Activated naive CD4-positive, alpha-beta T cell treated with anti-CD3 and anti-CD28 coated beads for 36 hours (primary cell): ENCODE measurements at regions of chr21 and their contacts with region 1.

Region 1: GRCh38 chr21:17780539-17780938 is 38.6 kb downstream of the C21orf91 start:
- DNase-seq: peak; percentile 77
- H3K4me3 Mint-ChIP-seq: peak overlapping the region; percentile 28
- H3K27ac Mint-ChIP-seq: peak overlapping the region; percentile 87
- H3K4me1 Mint-ChIP-seq: peaks cover 91% of the 10 kb centered on the region
- H3K27me3 Mint-ChIP-seq: no peaks in the 10 kb centered on the region

Region 2: DNA sequence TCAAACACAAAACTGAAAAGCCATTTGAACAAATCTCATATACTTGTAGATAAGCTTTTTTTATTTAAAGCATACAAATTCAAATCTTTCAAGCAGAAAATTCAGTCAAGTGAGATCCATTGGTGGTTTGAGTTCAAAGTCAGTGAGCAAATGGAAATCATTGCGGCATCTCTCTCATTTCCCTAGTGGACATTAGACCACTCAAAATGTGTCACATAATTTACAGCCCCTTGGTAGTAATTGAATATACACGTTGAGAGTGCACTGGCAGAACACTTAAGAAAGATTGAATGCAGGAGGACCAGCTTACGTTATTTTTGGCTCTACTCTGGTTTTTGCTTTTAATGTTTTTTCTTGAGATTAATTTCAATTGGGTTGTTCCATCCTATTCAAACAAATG is 1417.0 kb before region 1 on chr21:
- CTCF ChIA-PET with region 1: no interaction called
- intact Hi-C with region 1: no loop called
- DNase-seq: no peak
- H3K4me3 Mint-ChIP-seq: no peak overlapping the region
- H3K27ac Mint-ChIP-seq: no peak overlapping the region
- H3K4me1 Mint-ChIP-seq: no peaks in the 10 kb centered on the region
- H3K27me3 Mint-ChIP-seq: no peaks in the 10 kb centered on the region

Region 3: DNA sequence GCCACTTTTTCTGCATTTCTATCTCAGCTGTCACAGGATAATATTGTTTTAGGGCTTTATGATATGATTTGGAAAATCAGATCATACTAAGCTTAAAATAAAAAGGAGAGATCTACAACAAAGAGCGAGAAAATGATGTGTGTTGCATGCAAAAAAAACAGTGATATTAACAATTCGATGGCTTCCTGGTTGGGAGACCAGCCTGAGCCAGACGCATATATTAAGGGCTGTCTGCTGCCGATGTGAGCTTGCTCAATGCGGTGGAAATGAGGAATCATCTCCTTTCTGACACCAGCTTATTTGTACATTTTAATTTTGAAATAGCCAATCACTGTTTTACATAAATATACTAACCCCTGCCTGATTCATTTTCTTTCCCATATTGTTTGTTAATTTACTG is 1188.2 kb before region 1 on chr21:
- CTCF ChIA-PET with region 1: no interaction called
- intact Hi-C with region 1: no loop called
- DNase-seq: no peak
- H3K4me3 Mint-ChIP-seq: no peak overlapping the region
- H3K27ac Mint-ChIP-seq: no peak overlapping the region
- H3K4me1 Mint-ChIP-seq: no peaks in the 10 kb centered on the region
- H3K27me3 Mint-ChIP-seq: no peaks in the 10 kb centered on the region

Region 4: GRCh38 chr21:17003763-17004373 is 776.7 kb before region 1 on chr21:
- CTCF ChIA-PET with region 1: no interaction called
- intact Hi-C with region 1: loop called (anchors 5 kb)
- DNase-seq: no peak
- H3K4me3 Mint-ChIP-seq: no peak overlapping the region
- H3K27ac Mint-ChIP-seq: no peak overlapping the region
- H3K4me1 Mint-ChIP-seq: peaks cover 10% of the 10 kb centered on the region
- H3K27me3 Mint-ChIP-seq: no peaks in the 10 kb centered on the region

Region 5: GRCh38 chr21:17476006-17476405 is 304.5 kb before region 1 on chr21:
- CTCF ChIA-PET with region 1: no interaction called
- intact Hi-C with region 1: no loop called
- DNase-seq: no peak
- H3K4me3 Mint-ChIP-seq: no peak overlapping the region
- H3K27ac Mint-ChIP-seq: no peak overlapping the region
- H3K4me1 Mint-ChIP-seq: no peaks in the 10 kb centered on the region
- H3K27me3 Mint-ChIP-seq: no peaks in the 10 kb centered on the region

Region 6: GRCh38 chr21:17611414-17612022 is 169.0 kb before region 1 on chr21:
- CTCF ChIA-PET with region 1: no interaction called
- intact Hi-C with region 1: loop called (anchors 1 kb)
- DNase-seq: peak; percentile 88
- H3K4me3 Mint-ChIP-seq: peak overlapping the region; percentile 83
- H3K27ac Mint-ChIP-seq: peak overlapping the region; percentile 91
- H3K4me1 Mint-ChIP-seq: peaks cover 31% of the 10 kb centered on the region
- H3K27me3 Mint-ChIP-seq: no peaks in the 10 kb centered on the region

Region 7: GRCh38 chr21:17708522-17709265 is 71.8 kb before region 1 on chr21:
- CTCF ChIA-PET with region 1: no interaction called
- intact Hi-C with region 1: loop called (anchors 1 kb)
- DNase-seq: no peak
- H3K4me3 Mint-ChIP-seq: no peak overlapping the region
- H3K27ac Mint-ChIP-seq: peak overlapping the region; percentile 59
- H3K4me1 Mint-ChIP-seq: peaks cover 16% of the 10 kb centered on the region
- H3K27me3 Mint-ChIP-seq: no peaks in the 10 kb centered on the region

Region 8: GRCh38 chr21:17758657-17759056 is 21.9 kb before region 1 on chr21:
- CTCF ChIA-PET with region 1: no interaction called
- intact Hi-C with region 1: no loop called
- DNase-seq: no peak
- H3K4me3 Mint-ChIP-seq: no peak overlapping the region
- H3K27ac Mint-ChIP-seq: no peak overlapping the region
- H3K4me1 Mint-ChIP-seq: peaks cover 1% of the 10 kb centered on the region
- H3K27me3 Mint-ChIP-seq: no peaks in the 10 kb centered on the region

Region 9: DNA sequence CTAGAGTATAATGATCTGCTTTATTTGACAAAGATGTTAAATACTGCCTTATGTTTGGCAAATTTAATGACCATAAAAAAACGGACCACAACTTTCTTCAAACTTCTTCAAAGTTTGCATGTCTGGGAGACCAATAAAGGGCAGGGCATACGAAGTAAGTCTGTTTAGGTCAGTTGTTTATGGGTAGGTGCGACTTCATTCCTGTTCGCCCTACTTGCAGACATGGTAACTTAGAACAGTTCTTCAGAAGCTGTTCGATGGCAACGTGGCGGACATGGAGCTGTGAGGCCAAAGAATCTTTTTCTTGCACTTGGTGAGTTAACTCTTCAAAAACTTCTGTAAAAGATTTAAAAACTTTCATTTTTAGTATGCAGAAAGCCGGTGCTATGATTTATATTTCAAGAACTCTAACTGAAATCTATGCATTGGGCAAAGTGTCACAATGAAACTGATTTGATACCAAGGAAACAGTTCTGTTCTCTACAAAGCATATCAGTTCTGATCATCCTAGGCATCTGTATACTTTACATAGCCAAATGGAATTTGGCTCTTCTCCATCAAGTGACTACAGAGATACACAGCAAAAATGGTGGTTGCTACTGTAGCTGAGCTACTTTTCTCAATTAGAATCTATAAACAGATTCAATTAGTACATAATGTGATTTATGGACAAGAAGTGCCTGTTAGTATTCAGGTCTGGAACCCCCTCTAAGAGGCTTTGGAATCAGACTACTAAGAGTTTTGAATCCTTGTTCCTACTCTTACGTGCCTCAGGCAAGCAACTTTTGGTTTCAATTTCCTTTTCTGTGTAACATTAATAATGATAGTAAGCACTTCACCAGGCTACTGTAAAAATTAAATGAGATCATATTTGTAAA is 12.9 kb after region 1 on chr21:
- CTCF ChIA-PET with region 1: interaction called, 30 read pairs
- intact Hi-C with region 1: loop called (anchors 1 kb)
- DNase-seq: no peak
- H3K4me3 Mint-ChIP-seq: peak overlapping the region; percentile 53
- H3K27ac Mint-ChIP-seq: peak overlapping the region; percentile 89
- H3K4me1 Mint-ChIP-seq: peaks cover 62% of the 10 kb centered on the region
- H3K27me3 Mint-ChIP-seq: no peaks in the 10 kb centered on the region

Region 10: DNA sequence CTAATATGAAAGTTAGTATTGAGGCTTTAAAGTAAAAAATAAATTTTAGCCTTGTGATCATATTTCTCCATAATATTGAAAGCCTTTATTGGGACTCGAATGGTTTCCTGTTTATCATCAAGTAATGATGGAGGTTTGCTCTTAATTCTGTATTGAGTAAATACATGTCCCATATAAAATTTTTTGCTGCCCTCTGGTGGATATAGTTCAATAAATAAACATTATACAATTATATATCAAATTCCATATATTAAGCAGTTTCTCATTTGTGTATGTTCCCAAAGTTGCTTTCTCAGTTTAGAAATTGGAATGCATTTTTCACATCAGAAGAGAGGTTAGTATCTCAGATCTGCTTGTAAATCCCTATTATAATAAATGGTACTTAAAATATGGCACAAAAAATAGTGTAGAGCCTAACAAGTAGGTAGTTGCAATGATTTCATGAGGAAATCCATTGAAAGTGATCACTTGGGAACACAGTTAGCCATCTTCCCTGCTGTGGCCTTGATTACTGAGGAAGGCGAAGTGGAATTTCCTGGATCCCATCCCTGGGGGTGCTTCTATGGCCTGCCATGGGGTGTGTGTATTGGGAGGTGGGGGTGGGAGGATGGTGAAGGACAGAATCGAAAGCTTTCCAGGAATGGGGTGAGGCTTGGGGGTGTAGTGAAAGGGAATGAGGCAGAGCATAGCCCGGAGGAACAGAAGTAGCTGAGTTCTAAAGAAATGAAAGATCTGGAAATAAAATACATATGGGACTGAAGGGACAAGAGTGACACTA is 122.7 kb after region 1 on chr21:
- CTCF ChIA-PET with region 1: interaction called, 7 read pairs
- intact Hi-C with region 1: loop called (anchors 2 kb)
- DNase-seq: no peak
- H3K4me3 Mint-ChIP-seq: no peak overlapping the region
- H3K27ac Mint-ChIP-seq: no peak overlapping the region
- H3K4me1 Mint-ChIP-seq: peaks cover 8% of the 10 kb centered on the region
- H3K27me3 Mint-ChIP-seq: no peaks in the 10 kb centered on the region